ENCODE measurements at regions of chr5 and their contacts with region 1.

Region 1: GRCh38 chr5:80854583-80854982 is 105.6 kb upstream of the RASGRF2 start:
- DNase-seq: no peak
- ATAC-seq: no peak
- H3K4me3 Mint-ChIP-seq: no peak overlapping the region
- H3K27ac Mint-ChIP-seq: no peak overlapping the region
- H3K4me1 Mint-ChIP-seq: no peaks in the 10 kb centered on the region
- H3K27me3 Mint-ChIP-seq: no peaks in the 10 kb centered on the region
- CTCF ChIP-seq: no peak

Region 2: DNA sequence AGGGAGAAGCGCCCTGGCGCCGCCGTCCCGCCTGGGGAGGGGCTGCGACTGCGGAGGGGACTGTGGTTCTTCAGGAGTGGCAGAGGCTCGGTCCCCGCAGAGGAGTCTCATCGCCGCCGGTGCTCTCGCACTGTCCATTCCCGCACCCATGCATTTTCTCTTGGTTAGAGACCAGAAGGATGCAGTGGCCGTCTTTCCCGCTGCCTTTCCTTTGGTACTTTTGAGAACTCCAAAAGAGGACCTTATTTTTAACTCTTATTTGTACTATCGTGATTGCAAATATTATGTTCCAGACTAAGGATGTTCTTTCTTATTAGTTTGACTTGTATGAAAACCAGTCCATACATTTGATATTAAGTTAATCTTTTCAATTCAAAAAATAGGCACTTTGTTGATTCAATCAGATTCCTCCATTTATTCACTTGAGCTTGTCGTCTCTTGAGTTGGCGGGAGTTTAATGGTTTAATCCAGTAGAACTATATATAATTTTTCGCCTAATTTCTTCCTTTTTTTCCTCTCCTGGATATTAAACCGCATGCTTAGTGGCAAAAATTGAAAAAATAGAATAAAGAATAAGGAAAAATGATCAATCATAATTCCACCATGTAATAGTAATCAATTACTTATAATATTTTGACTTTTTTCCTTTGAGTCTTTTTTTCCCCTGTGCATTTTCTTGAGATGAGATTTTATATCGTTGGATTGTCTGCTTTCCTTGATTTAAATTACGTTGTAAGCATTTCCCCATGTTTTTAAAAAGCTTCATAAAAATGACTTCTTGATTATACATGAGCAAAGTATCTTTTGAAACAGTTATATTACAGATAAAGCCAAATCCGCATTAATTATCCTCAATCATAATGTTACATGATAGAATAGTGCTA is 445.9 kb before region 1 on chr5:
- CTCF ChIA-PET with region 1: no interaction called
- POLR2A ChIA-PET with region 1: no interaction called
- intact Hi-C with region 1: no loop called
- DNase-seq: no peak
- ATAC-seq: peak; percentile 20
- H3K4me3 Mint-ChIP-seq: peak overlapping the region; percentile 91
- H3K27ac Mint-ChIP-seq: peak overlapping the region; percentile 95
- H3K4me1 Mint-ChIP-seq: peaks cover 17% of the 10 kb centered on the region
- H3K27me3 Mint-ChIP-seq: no peaks in the 10 kb centered on the region
- CTCF ChIP-seq: no peak

Region 3: GRCh38 chr5:80871541-80871961 is 17.0 kb after region 1 on chr5:
- CTCF ChIA-PET with region 1: no interaction called
- POLR2A ChIA-PET with region 1: no interaction called
- intact Hi-C with region 1: loop called (anchors 1 kb)
- DNase-seq: no peak
- ATAC-seq: no peak
- H3K4me3 Mint-ChIP-seq: no peak overlapping the region
- H3K27ac Mint-ChIP-seq: no peak overlapping the region
- H3K4me1 Mint-ChIP-seq: no peaks in the 10 kb centered on the region
- H3K27me3 Mint-ChIP-seq: no peaks in the 10 kb centered on the region
- CTCF ChIP-seq: no peak

Measured in activated B cell treated with CpG ODN at 0.5 μM for 24 hours (primary cell).